ENCODE measurements at regions of chr11 and their contacts with region 1.

Region 1: DNA sequence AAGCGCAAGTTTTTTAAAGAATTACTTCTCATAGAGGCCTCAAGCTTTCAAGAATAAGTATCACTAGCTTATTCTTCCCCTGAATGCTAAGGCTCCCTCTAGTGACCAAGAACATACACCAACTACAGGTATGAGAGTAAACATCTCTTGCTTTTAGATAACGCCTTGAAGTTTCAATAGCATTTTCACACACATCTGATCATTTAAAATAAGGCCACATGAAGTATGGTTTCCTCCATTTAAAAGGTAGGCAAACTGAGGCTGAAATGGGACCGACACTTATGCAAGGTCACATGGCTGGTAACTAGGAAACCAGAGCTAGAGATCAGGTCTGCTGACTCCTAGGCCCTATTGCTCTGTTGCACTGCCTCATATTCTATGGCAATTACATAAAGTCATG is 66.5 kb downstream of the CCDC34 start:
- DNase-seq: peak; percentile 36 to 72
- ATAC-seq: peak; percentile 77 to 96; a peak in 5 of 6 replicates
- H3K4me3 ChIP-seq: no peak overlapping the region
- H3K27ac ChIP-seq: no peak overlapping the region
- H3K4me1 ChIP-seq: no peaks in the 10 kb centered on the region
- CTCF ChIP-seq: peak; percentile 79
- EP300 ChIP-seq: no peak
- POLR2A ChIP-seq: no peak
- RAD21 ChIP-seq: peak; percentile 81

Region 2: DNA sequence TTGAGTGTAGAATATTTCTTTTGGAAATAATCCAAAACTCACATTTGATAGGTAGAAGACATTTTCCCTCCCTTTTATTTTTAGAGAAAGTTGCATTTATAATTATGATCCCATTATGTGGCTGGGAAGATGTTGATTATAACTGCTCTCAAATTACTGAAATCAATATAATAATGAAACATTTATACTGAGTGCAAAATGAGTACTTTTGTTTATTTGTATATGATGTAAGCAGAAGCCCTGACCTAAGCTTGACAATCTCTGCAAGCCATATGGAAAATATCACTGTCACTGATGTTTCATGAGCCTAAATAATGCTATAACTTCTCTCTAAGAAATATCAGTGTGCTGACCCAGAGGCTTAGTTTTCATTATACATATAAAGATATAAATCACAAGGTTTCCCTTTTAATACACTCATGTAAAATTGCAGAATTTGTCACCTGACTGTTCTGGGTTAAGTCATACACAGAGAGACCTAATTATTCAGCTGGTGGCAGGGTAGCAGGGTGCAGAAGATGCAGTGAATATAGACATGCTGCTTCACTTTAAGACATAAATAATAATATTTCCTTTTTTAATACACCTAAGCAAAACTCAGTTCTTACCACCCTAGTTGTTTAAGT is 156.6 kb before region 1 on chr11:
- CTCF ChIA-PET with region 1: no interaction called
- POLR2A ChIA-PET with region 1: no interaction called
- DNase-seq: no peak
- ATAC-seq: no peak
- H3K4me3 ChIP-seq: no peak overlapping the region
- H3K27ac ChIP-seq: no peak overlapping the region
- H3K4me1 ChIP-seq: no peaks in the 10 kb centered on the region
- CTCF ChIP-seq: no peak
- EP300 ChIP-seq: no peak
- POLR2A ChIP-seq: no peak
- RAD21 ChIP-seq: no peak

Region 3: GRCh38 chr11:27196203-27196897 is 100.1 kb before region 1 on chr11:
- CTCF ChIA-PET with region 1: interaction called, 41 read pairs
- POLR2A ChIA-PET with region 1: interaction called, 3 read pairs
- DNase-seq: no peak
- ATAC-seq: no peak
- H3K4me3 ChIP-seq: no peak overlapping the region
- H3K27ac ChIP-seq: no peak overlapping the region
- H3K4me1 ChIP-seq: peaks cover 15% of the 10 kb centered on the region
- CTCF ChIP-seq: no peak
- EP300 ChIP-seq: no peak
- POLR2A ChIP-seq: no peak
- RAD21 ChIP-seq: no peak

Region 4: DNA sequence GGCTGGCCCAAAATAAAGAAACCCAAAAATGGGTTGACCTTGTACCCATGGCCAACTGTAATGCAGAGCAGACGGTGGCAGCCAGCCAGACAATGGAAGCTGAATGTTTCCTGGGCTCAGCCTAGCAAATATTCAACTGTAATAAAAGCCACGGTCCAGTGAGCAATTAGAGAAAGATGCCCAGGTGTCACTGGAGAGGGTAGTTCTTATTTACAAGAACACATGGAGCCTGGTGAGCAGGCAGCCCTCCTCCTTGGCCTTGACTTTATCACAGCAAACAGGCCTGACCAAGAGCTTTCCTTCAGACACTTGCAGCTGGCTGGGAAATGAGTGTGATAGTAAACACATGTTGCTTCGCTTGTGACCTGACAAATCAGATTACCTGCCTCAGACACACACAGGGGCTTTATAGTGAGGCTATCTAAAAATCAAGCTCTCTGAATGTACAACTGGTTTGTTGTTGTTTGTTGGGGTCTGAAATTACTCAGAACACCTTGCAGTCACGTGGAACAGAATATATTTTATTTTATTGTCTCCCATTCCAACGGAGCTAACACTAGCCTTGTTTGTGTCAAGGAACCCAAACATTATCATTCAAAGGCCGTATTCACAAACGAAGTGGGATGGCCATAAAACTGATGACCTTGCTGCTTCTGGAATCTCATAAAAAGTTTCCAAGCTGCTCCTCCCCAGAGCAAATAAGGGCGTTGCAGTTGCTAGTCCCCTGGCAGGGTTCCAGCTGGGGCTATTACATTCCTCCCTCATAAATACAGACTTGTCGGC is 94.9 kb before region 1 on chr11:
- CTCF ChIA-PET with region 1: interaction called, 41 read pairs
- POLR2A ChIA-PET with region 1: interaction called, 3 read pairs
- DNase-seq: peak; percentile 76 to 92
- ATAC-seq: peak; percentile 67 to 79; a peak in 5 of 6 replicates
- H3K4me3 ChIP-seq: no peak overlapping the region
- H3K27ac ChIP-seq: peak overlapping the region; percentile 77 to 80
- H3K4me1 ChIP-seq: peaks cover 62% of the 10 kb centered on the region
- CTCF ChIP-seq: no peak
- EP300 ChIP-seq: no peak; a peak in 1 of 5 replicates
- POLR2A ChIP-seq: no peak
- RAD21 ChIP-seq: 0 out of 5 replicates have a peak, but pooled peaks of 1 of the 2 experiments have one; percentile 24

Region 5: DNA sequence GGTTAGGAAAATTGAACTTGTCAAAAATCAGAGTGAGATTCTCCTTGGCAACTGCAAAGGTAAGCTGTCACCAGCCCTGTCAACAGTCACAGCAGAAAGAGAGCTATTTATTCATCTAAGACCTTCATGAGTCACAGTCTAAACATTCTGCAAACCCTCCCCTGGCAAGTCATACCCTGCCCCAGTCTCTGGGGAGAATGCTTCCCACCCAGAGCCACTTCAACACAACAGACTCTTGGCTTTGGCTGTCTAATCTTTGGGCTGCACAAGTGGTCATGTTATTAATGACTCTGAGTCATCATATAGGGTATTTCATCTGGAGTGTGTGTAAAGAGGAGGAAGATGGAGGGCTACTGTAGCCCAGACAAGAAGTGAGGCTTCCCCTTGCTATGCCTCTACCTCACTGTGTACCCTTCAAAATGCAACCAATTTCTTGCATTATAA is 86.9 kb before region 1 on chr11:
- CTCF ChIA-PET with region 1: interaction called, 41 read pairs
- POLR2A ChIA-PET with region 1: no interaction called
- DNase-seq: peak; percentile 85 to 94
- ATAC-seq: peak; percentile 92
- H3K4me3 ChIP-seq: no peak overlapping the region
- H3K27ac ChIP-seq: peak overlapping the region; percentile 64 to 77; a peak in 5 of 6 replicates
- H3K4me1 ChIP-seq: peaks cover 75% of the 10 kb centered on the region
- CTCF ChIP-seq: no peak
- EP300 ChIP-seq: peak; percentile 53 to 67; a peak in 3 of 5 replicates
- POLR2A ChIP-seq: no peak
- RAD21 ChIP-seq: peak; percentile 16 to 35; a peak in 2 of 5 replicates

Region 6: DNA sequence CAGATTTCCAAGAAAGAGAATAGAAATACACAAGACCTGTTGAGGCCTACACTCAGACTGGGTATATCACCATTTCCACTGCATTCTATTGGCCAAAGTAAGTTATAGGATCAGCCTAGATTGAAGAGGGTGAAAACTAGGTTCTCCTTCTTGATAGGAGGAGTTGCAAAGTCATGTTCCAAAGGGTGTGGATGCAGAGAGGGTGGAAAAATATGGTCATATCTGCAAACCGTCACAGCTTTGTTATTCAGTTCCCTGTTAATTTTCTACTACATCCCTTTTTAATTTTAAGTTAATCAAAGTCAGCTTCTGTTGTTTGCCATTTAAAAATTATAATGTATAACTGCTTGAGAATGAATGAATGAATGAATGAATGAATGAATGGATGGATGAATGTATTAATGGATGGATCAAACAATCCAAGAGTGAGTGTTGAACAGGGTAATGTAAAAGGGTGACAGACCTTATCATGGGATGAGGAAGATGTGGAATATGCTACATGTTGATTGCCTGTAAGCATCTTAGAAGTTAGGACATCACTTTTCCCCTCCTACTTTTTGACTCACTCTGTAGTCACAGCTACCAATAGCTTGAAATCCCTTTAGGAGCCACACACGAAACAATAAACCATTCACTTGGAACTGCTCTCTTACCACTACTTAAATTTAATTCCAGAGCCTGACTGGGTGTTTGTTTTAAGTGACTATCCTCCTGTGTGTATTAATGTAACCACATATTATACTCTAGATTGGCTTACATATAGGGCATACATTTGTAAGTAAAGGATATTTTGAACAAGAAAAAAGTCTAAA is 55.0 kb before region 1 on chr11:
- CTCF ChIA-PET with region 1: interaction called, 11 read pairs
- POLR2A ChIA-PET with region 1: no interaction called
- DNase-seq: peak in 1 of 2 experiments; percentile 19
- ATAC-seq: peak; percentile 52 to 70; a peak in 4 of 6 replicates
- H3K4me3 ChIP-seq: no peak overlapping the region
- H3K27ac ChIP-seq: no peak overlapping the region
- H3K4me1 ChIP-seq: peaks cover 13% of the 10 kb centered on the region; the same call in 1 of the 3 replicates
- CTCF ChIP-seq: no peak
- EP300 ChIP-seq: no peak
- POLR2A ChIP-seq: no peak
- RAD21 ChIP-seq: no peak

Region 7: DNA sequence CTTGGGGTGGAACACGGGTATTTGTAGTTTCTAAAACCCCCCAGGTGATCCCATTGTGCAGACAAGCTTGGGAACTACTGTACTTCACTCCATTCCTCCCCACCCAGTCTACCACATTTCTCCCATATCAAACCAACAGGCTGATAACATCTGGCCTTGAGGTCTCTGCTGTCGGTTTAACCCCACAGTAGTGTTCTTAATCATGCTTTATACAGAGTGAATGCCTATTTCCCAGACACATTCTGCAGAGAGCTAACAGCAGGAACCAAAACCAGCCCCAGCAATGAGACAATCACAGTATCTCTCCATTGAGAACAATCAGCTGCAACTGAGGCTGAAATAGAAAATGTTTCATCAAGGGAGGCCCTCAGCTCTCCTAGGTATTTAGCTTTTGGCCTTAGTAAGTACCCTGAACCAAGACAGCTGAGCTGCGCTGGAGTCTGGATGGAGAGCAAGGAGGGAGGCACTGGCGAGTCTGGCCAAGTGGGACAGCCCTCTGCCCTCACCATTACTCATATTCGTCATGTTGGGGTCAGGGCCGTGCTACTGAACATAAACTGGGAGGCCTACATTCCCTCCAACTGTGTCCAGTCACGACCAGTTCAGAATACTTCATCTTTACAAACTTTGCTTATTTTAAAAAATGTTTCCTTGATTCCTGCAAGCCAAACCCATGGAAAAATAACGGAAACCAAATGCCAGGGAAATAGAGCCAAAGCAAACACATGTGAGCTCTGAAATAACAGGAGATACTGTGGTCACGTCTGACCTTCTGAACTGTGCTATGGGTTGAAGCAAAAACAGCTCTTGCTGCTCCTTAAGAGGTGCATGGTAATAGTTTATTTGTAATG is 14.5 kb before region 1 on chr11:
- CTCF ChIA-PET with region 1: interaction called, 48 read pairs
- POLR2A ChIA-PET with region 1: no interaction called
- DNase-seq: peak in 1 of 2 experiments; percentile 83
- ATAC-seq: peak; percentile 59 to 94
- H3K4me3 ChIP-seq: no peak overlapping the region
- H3K27ac ChIP-seq: peak overlapping the region; percentile 52 to 58; a peak in 5 of 6 replicates
- H3K4me1 ChIP-seq: peaks cover 20% of the 10 kb centered on the region
- CTCF ChIP-seq: no peak
- EP300 ChIP-seq: 0 out of 5 replicates have a peak, but pooled peaks of 1 of the 2 experiments have one; percentile 18
- POLR2A ChIP-seq: no peak
- RAD21 ChIP-seq: no peak; a peak in 1 of 5 replicates

Region 8: GRCh38 chr11:27313157-27313821 is 16.8 kb after region 1 on chr11:
- CTCF ChIA-PET with region 1: interaction called, 38 read pairs
- POLR2A ChIA-PET with region 1: no interaction called
- DNase-seq: no peak
- ATAC-seq: no peak
- H3K4me3 ChIP-seq: no peak overlapping the region
- H3K27ac ChIP-seq: peak overlapping the region; percentile 61 to 68
- H3K4me1 ChIP-seq: peaks cover 49% of the 10 kb centered on the region
- CTCF ChIP-seq: no peak
- EP300 ChIP-seq: no peak
- POLR2A ChIP-seq: no peak
- RAD21 ChIP-seq: no peak